OCI-LY7 (cell line): ENCODE measurements at regions of chr2 and their contacts with region 1.

Region 1: GRCh38 chr2:209322041-209322440 is 101.8 kb upstream of the MAP2 start:
- DNase-seq: no peak
- H3K4me3 ChIP-seq: no peak overlapping the region
- H3K27ac ChIP-seq: no peak overlapping the region
- H3K4me1 ChIP-seq: no peaks in the 10 kb centered on the region
- CTCF ChIP-seq: peak; percentile 33; the same call in 1 of the 2 replicates

Region 2: DNA sequence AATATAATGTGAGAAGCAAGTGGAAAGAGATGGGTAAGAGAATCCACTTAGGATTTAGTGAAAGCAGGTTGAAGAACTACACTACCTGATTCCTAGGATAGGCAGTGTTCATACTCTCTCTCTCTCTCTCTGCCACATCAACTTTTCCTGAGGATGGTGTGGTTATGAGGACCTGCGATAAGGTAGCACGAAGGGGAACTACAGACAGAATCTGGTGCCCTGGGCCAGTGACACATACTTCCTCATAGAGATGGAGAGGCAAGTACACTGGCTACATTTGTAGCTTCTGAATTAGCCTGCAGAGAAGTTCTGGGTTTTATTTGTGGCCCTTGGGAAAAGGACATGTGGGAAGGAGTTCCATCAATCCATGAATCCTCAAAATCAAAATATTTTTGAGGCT is 871.0 kb before region 1 on chr2:
- CTCF ChIA-PET with region 1: no interaction called
- POLR2A ChIA-PET with region 1: no interaction called
- intact Hi-C with region 1: loop called (anchors 10 kb)
- DNase-seq: no peak
- H3K4me3 ChIP-seq: no peak overlapping the region
- H3K27ac ChIP-seq: no peak overlapping the region
- H3K4me1 ChIP-seq: no peaks in the 10 kb centered on the region
- CTCF ChIP-seq: no peak

Region 3: DNA sequence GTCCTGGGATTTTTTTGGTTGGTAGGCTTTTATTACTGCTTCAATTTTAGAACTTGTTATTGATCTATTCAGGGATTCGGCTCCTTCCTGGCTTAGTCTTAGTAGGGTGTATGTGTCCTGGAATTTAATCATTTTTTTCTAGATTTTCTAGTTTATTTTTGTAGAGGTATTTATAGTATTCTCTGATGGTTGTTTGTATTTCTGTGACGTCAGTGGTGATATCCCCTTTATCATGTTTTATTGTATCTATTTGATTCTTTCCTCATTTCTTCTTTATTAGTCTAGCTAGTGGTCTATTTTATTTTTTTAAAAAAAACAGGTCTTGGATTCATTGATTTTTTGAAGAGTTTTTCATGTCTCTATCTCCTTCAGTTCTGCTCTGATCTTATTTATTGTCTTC is 91.5 kb before region 1 on chr2:
- CTCF ChIA-PET with region 1: no interaction called
- POLR2A ChIA-PET with region 1: no interaction called
- intact Hi-C with region 1: no loop called
- DNase-seq: no peak
- H3K4me3 ChIP-seq: no peak overlapping the region
- H3K27ac ChIP-seq: no peak overlapping the region
- H3K4me1 ChIP-seq: no peaks in the 10 kb centered on the region
- CTCF ChIP-seq: no peak